ENCODE measurements at regions of chr2 and their contacts with region 1.

Region 1: DNA sequence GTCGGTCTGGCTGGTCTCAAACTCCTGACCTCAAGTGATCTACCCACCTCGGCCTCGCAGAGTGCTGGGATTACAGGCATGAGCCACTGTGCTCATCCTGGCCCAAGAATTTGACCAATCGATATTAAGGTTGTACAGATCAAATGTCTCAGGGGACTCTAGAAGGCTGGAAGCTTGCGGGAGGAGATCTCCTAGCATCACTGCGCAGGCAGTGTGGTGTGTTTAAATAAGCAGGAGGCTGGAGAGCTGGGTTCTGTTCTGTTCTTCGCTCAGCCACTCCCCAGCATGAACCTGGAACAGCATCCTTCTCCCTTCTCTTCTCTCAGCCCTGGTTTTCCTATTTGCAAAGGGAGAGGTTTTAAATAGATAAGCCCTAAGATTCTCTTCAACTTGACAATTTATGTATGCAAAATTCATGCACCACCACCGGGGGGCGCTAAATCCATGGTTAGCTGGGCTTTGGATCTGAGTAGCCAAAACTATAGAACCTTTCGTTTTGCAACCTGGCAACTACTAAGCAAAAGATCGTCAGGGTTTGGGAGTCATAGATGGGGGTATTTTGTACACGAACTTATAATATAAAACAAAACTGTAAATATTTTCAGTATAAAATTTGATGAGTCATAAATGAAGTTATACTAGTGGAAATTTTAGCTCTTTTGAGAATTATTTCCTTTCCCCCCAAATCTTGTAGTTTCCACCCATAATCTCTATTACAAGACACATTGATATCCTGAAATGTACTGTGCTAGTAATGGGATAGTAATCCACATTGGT is 60.6 kb downstream of the SLC16A14 start:
- DNase-seq: peak; percentile 35 to 90 (median 62)
- ATAC-seq: peak in 3 of 4 donors; percentile 70 to 87 (median 80)
- H3K4me3 ChIP-seq: peak overlapping the region in 1 of 4 donors; percentile 2
- H3K27ac ChIP-seq: no peak overlapping the region
- H3K4me1 ChIP-seq: no peaks in the 10 kb centered on the region
- H3K27me3 ChIP-seq: no peaks in the 10 kb centered on the region
- CTCF ChIP-seq: peak; percentile 47 to 75 (median 68)

Region 2: DNA sequence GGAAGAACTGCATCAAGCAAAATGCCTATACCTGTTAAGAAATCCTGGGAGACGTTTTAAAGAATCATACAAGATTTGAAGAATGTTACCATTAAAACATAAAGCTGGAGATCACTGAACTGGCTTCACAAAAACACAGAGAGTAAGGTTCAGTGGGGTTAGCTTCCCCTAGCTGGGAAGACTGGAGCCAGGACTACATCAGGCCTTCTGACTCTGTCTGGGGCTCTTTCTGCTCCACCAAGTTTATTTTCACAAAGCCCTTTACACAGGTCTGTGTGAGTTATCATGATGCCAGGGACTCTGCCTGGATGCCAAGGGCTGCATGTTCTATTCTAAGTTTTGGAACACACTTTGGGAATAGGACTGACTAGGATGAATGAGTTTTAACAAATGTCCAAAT is 246.5 kb before region 1 on chr2:
- intact Hi-C with region 1: no loop called
- DNase-seq: no peak
- ATAC-seq: no peak
- H3K4me3 ChIP-seq: no peak overlapping the region
- H3K27ac ChIP-seq: no peak overlapping the region
- H3K4me1 ChIP-seq: no peaks in the 10 kb centered on the region
- H3K27me3 ChIP-seq: no peaks in the 10 kb centered on the region
- CTCF ChIP-seq: no peak

Region 3: GRCh38 chr2:229921892-229922445 is 86.2 kb before region 1 on chr2 and contains the start of gene TRIP12:
- intact Hi-C with region 1: no loop called
- DNase-seq: peak; percentile 90 to 93 (median 92)
- ATAC-seq: peak; percentile 89 to 94 (median 90)
- H3K4me3 ChIP-seq: peak within 1 kb of the TSS; percentile 55 to 96 (median 68)
- H3K27ac ChIP-seq: peak within 1 kb of the TSS; percentile 92 to 95 (median 94)
- H3K4me1 ChIP-seq: peaks cover 0 to 5% (median 3%) of the 10 kb centered on the region in 3 donors
- H3K27me3 ChIP-seq: no peaks in the 10 kb centered on the region
- CTCF ChIP-seq: no peak
- total RNA-seq, gene TRIP12: 51.5 to 106 (median 63.7) TPM

Region 4: GRCh38 chr2:230153390-230153976 is 145.4 kb after region 1 on chr2:
- intact Hi-C with region 1: loop called in 1 of 3 experiments (anchors 10 kb)
- DNase-seq: no peak
- ATAC-seq: no peak
- H3K4me3 ChIP-seq: no peak overlapping the region
- H3K27ac ChIP-seq: no peak overlapping the region
- H3K4me1 ChIP-seq: no peaks in the 10 kb centered on the region
- H3K27me3 ChIP-seq: no peaks in the 10 kb centered on the region
- CTCF ChIP-seq: no peak

Region 5: GRCh38 chr2:230614913-230615332 is 606.8 kb after region 1 on chr2:
- intact Hi-C with region 1: loop called in 1 of 3 experiments (anchors 5 kb)
- DNase-seq: no peak
- ATAC-seq: no peak
- H3K4me3 ChIP-seq: no peak overlapping the region
- H3K27ac ChIP-seq: no peak overlapping the region
- H3K4me1 ChIP-seq: no peaks in the 10 kb centered on the region
- H3K27me3 ChIP-seq: no peaks in the 10 kb centered on the region
- CTCF ChIP-seq: no peak

Measured in pancreas (tissue), 10 donors.